Activated naive CD4-positive, alpha-beta T cell treated with anti-CD3 and anti-CD28 coated beads for 36 hours (primary cell): ENCODE measurements at regions of chr1 and their contacts with region 1.

Region 1: DNA sequence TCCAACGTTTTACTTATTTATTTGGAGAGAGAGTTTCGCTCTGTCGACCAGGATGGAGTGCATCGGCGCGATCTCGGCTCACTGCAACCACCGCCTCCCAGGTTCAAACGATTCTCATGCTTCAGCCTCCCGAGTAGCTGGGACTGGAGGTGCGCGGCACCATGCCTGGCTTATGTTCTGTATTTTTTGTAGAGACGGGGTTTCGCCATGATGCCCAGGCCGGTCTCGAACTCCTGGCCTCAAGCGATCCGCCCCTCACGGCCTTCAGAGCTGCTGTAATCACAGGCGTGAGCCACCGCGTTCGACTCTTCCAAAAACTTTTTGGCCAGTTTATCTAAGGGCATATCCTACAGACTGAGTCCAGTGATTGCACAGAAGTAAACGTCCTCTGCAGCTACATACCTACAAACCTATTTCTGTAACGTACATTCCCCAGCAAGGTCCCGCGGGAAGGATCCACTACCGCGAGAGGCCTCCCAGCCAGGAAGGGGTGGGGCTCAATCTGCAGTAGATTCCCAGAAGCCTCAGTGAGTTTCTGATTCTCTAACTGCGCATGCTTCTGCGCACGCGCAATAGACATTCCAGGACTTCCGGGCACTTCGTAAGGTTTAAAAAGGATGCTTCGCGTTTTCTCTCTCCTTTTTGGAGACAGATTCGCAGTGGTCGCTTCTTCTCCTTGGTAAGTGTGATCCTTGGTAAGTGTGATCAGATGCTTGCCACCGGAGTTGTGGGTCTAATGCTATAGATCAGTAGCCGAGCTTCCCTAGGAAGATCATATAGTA is at the start of gene RCC1:
- DNase-seq: peak; percentile 98
- H3K4me3 Mint-ChIP-seq: peak within 1 kb of the TSS; percentile 99
- H3K27ac Mint-ChIP-seq: peak within 1 kb of the TSS; percentile 98
- H3K4me1 Mint-ChIP-seq: peaks cover 22% of the 10 kb centered on the region
- H3K27me3 Mint-ChIP-seq: peaks cover 3% of the 10 kb centered on the region
- total RNA-seq, gene RCC1: 106 to 110 TPM

Region 2: GRCh38 chr1:27300341-27301051 is 1205.1 kb before region 1 on chr1:
- CTCF ChIA-PET with region 1: no interaction called
- intact Hi-C with region 1: no loop called
- DNase-seq: peak; percentile 84
- H3K4me3 Mint-ChIP-seq: no peak overlapping the region
- H3K27ac Mint-ChIP-seq: no peak overlapping the region
- H3K4me1 Mint-ChIP-seq: no peaks in the 10 kb centered on the region
- H3K27me3 Mint-ChIP-seq: no peaks in the 10 kb centered on the region

Region 3: GRCh38 chr1:27968694-27969093 is 536.9 kb before region 1 on chr1:
- CTCF ChIA-PET with region 1: no interaction called
- intact Hi-C with region 1: no loop called
- DNase-seq: no peak
- H3K4me3 Mint-ChIP-seq: no peak overlapping the region
- H3K27ac Mint-ChIP-seq: peak overlapping the region; percentile 63
- H3K4me1 Mint-ChIP-seq: peaks cover 11% of the 10 kb centered on the region
- H3K27me3 Mint-ChIP-seq: no peaks in the 10 kb centered on the region

Region 4: DNA sequence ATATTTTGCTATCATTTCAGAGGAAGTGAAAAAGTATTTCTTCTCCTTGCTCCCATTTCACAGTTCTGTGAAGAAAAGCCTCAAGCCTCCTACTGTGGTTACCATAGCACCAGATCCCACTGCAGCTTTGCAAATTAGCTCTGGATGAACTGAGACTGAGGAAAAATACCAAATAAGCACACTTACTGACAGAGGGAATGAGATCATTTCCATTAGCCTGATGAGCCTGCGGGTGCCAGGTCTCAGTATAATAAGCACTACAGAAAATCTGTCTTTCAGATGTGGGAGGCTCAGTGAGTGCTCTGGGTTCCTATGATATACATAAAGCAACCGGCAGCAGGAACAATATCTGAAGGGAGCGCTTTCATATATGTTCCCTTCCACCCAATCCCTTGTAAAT is 524.5 kb before region 1 on chr1:
- CTCF ChIA-PET with region 1: no interaction called
- intact Hi-C with region 1: no loop called
- DNase-seq: no peak
- H3K4me3 Mint-ChIP-seq: no peak overlapping the region
- H3K27ac Mint-ChIP-seq: no peak overlapping the region
- H3K4me1 Mint-ChIP-seq: no peaks in the 10 kb centered on the region
- H3K27me3 Mint-ChIP-seq: no peaks in the 10 kb centered on the region

Region 5: GRCh38 chr1:28259307-28260167 is 246.1 kb before region 1 on chr1 and contains the start of gene SESN2:
- CTCF ChIA-PET with region 1: no interaction called
- intact Hi-C with region 1: loop called (anchors 1 kb)
- DNase-seq: peak; percentile 100
- H3K4me3 Mint-ChIP-seq: peak within 1 kb of the TSS; percentile 68
- H3K27ac Mint-ChIP-seq: peak within 1 kb of the TSS; percentile 94
- H3K4me1 Mint-ChIP-seq: peaks cover 45% of the 10 kb centered on the region
- H3K27me3 Mint-ChIP-seq: no peaks in the 10 kb centered on the region
- total RNA-seq, gene SESN2: 46.2 to 46.9 TPM

Region 6: GRCh38 chr1:28412731-28413130 is 92.9 kb before region 1 on chr1:
- CTCF ChIA-PET with region 1: no interaction called
- intact Hi-C with region 1: loop called (anchors 5 kb)
- DNase-seq: no peak
- H3K4me3 Mint-ChIP-seq: no peak overlapping the region
- H3K27ac Mint-ChIP-seq: no peak overlapping the region
- H3K4me1 Mint-ChIP-seq: peaks cover 12% of the 10 kb centered on the region
- H3K27me3 Mint-ChIP-seq: no peaks in the 10 kb centered on the region

Region 7: GRCh38 chr1:28449904-28450303 is 55.7 kb before region 1 on chr1:
- CTCF ChIA-PET with region 1: interaction called, 3 read pairs
- intact Hi-C with region 1: loop called (anchors 2 kb)
- DNase-seq: peak; percentile 86
- H3K4me3 Mint-ChIP-seq: no peak overlapping the region
- H3K27ac Mint-ChIP-seq: peak overlapping the region; percentile 71
- H3K4me1 Mint-ChIP-seq: peaks cover 26% of the 10 kb centered on the region
- H3K27me3 Mint-ChIP-seq: no peaks in the 10 kb centered on the region

Region 8: GRCh38 chr1:28480308-28480707 is 25.3 kb before region 1 on chr1:
- CTCF ChIA-PET with region 1: no interaction called
- intact Hi-C with region 1: no loop called
- DNase-seq: no peak
- H3K4me3 Mint-ChIP-seq: no peak overlapping the region
- H3K27ac Mint-ChIP-seq: no peak overlapping the region
- H3K4me1 Mint-ChIP-seq: no peaks in the 10 kb centered on the region
- H3K27me3 Mint-ChIP-seq: no peaks in the 10 kb centered on the region

Region 9: GRCh38 chr1:28552758-28553663 is 47.4 kb after region 1 on chr1 and contains the start of gene TRNAU1AP:
- CTCF ChIA-PET with region 1: no interaction called
- intact Hi-C with region 1: loop called (anchors 1 kb)
- DNase-seq: peak; percentile 99
- H3K4me3 Mint-ChIP-seq: peak within 1 kb of the TSS; percentile 94
- H3K27ac Mint-ChIP-seq: peak within 1 kb of the TSS; percentile 97
- H3K4me1 Mint-ChIP-seq: peaks cover 19% of the 10 kb centered on the region
- H3K27me3 Mint-ChIP-seq: no peaks in the 10 kb centered on the region
- total RNA-seq, gene TRNAU1AP: 36.7 to 39.4 TPM

Region 10: GRCh38 chr1:28648474-28649198 is 143.0 kb after region 1 on chr1 and contains the start of gene RNU11:
- CTCF ChIA-PET with region 1: interaction called, 3 read pairs
- intact Hi-C with region 1: loop called (anchors 1 kb)
- DNase-seq: peak; percentile 92
- H3K4me3 Mint-ChIP-seq: peak within 1 kb of the TSS; percentile 92
- H3K27ac Mint-ChIP-seq: peak within 1 kb of the TSS; percentile 99
- H3K4me1 Mint-ChIP-seq: peaks cover 28% of the 10 kb centered on the region
- H3K27me3 Mint-ChIP-seq: no peaks in the 10 kb centered on the region
- total RNA-seq, gene RNU11: not detected

Region 11: GRCh38 chr1:28736450-28737306 is 231.1 kb after region 1 on chr1 and contains the start of gene YTHDF2:
- CTCF ChIA-PET with region 1: no interaction called
- intact Hi-C with region 1: loop called (anchors 1 kb)
- DNase-seq: peak; percentile 99
- H3K4me3 Mint-ChIP-seq: peak within 1 kb of the TSS; percentile 96
- H3K27ac Mint-ChIP-seq: peak within 1 kb of the TSS; percentile 92
- H3K4me1 Mint-ChIP-seq: peaks cover 33% of the 10 kb centered on the region
- H3K27me3 Mint-ChIP-seq: no peaks in the 10 kb centered on the region
- total RNA-seq, gene YTHDF2: 64.9 to 66.1 TPM